Activated CD8-positive, alpha-beta T cell treated with anti-CD3 and anti-CD28 coated beads for 36 hours (primary cell): ENCODE measurements at regions of chr17 and their contacts with region 1.

Region 1: GRCh38 chr17:76014184-76014924 is 12.8 kb downstream of the EVPL start:
- DNase-seq: peak; percentile 88
- ATAC-seq: peak; percentile 100
- H3K4me3 Mint-ChIP-seq: no peak overlapping the region
- H3K27ac Mint-ChIP-seq: peak overlapping the region; percentile 55
- H3K4me1 Mint-ChIP-seq: peaks cover 8% of the 10 kb centered on the region
- H3K27me3 Mint-ChIP-seq: no peaks in the 10 kb centered on the region
- CTCF ChIP-seq: peak; percentile 95

Region 2: DNA sequence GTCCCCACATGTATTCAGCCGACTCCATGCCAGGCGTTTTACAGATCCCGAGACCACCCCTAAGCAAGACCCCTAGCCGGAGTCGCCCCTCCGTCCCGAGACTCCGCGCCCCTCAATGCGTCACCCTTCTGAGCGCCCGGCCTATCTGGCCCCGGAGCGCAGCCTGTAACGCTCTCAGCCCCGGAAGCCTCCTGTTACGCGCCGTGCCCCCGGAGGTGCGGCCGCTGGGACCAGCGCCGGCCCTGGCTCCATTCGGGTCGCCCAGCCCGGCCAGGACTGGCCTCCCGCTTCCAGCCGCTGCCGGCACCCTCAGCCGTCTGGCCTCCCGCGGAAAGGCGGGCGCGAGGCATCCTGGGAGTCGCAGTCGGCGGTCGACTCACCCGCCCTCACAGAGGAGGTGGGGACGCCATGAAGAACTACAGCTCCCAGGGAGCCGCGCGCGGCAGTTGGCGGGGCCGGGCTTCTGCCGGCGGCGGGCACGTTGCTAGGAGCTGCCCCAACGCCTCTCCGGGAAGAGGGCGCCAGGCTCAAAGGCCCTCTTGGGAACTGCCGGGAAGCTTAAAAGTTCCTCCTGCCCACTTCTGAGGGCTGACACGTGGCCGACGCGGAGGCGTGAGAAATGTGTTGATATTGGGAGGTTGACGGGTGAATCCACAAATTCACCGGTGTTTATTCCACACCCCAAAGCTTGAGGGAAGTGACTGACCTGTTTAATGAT is 73.5 kb before region 1 on chr17 and contains the start of gene FBF1:
- CTCF ChIA-PET with region 1: no interaction called
- POLR2A ChIA-PET with region 1: no interaction called
- intact Hi-C with region 1: no loop called
- DNase-seq: peak; percentile 93
- ATAC-seq: peak; percentile 99
- H3K4me3 Mint-ChIP-seq: peak within 1 kb of the TSS; percentile 86
- H3K27ac Mint-ChIP-seq: peak within 1 kb of the TSS; percentile 86
- H3K4me1 Mint-ChIP-seq: peaks cover 12% of the 10 kb centered on the region
- H3K27me3 Mint-ChIP-seq: no peaks in the 10 kb centered on the region
- CTCF ChIP-seq: no peak
- total RNA-seq, gene FBF1: 13.2 to 16.2 TPM

Region 3: DNA sequence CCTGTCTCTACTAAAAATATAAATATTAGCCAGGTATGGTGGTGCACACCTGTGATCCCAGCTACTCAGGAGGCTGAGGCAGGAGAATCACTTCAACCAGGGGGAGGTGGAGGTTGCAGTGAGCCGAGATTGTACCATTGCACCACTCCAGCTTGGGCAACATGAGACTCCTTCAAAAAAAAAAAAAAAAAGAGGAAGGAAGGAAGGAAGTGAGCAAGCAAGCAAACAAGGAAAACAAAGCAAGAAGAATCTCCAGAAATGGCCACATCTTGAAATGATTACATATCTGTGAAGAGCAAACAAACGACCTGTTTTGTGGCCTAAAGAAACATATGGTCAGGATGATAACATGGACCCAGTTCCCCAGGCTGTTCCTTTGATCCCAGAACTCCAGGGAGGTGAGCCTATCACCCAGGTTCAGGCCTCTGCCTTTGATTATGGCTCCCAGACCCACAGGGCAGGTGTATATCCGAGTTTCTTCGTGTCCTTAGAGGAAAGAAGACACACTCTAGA is 44.3 kb before region 1 on chr17:
- CTCF ChIA-PET with region 1: no interaction called
- POLR2A ChIA-PET with region 1: no interaction called
- intact Hi-C with region 1: no loop called
- DNase-seq: no peak
- ATAC-seq: no peak
- H3K4me3 Mint-ChIP-seq: no peak overlapping the region
- H3K27ac Mint-ChIP-seq: no peak overlapping the region
- H3K4me1 Mint-ChIP-seq: peaks cover 4% of the 10 kb centered on the region
- H3K27me3 Mint-ChIP-seq: no peaks in the 10 kb centered on the region
- CTCF ChIP-seq: no peak

Region 4: GRCh38 chr17:76000016-76000754 is 14.2 kb before region 1 on chr17:
- CTCF ChIA-PET with region 1: interaction called, 122 read pairs
- POLR2A ChIA-PET with region 1: no interaction called
- intact Hi-C with region 1: no loop called
- DNase-seq: peak; percentile 83
- ATAC-seq: peak; percentile 93
- H3K4me3 Mint-ChIP-seq: no peak overlapping the region
- H3K27ac Mint-ChIP-seq: no peak overlapping the region
- H3K4me1 Mint-ChIP-seq: peaks cover 14% of the 10 kb centered on the region
- H3K27me3 Mint-ChIP-seq: no peaks in the 10 kb centered on the region
- CTCF ChIP-seq: peak; percentile 86

Region 5: GRCh38 chr17:76048025-76048605 is 33.8 kb after region 1 on chr17:
- CTCF ChIA-PET with region 1: interaction called, 11 read pairs
- POLR2A ChIA-PET with region 1: no interaction called
- intact Hi-C with region 1: no loop called
- DNase-seq: no peak
- ATAC-seq: no peak
- H3K4me3 Mint-ChIP-seq: no peak overlapping the region
- H3K27ac Mint-ChIP-seq: no peak overlapping the region
- H3K4me1 Mint-ChIP-seq: peaks cover 10% of the 10 kb centered on the region
- H3K27me3 Mint-ChIP-seq: no peaks in the 10 kb centered on the region
- CTCF ChIP-seq: no peak

Region 6: DNA sequence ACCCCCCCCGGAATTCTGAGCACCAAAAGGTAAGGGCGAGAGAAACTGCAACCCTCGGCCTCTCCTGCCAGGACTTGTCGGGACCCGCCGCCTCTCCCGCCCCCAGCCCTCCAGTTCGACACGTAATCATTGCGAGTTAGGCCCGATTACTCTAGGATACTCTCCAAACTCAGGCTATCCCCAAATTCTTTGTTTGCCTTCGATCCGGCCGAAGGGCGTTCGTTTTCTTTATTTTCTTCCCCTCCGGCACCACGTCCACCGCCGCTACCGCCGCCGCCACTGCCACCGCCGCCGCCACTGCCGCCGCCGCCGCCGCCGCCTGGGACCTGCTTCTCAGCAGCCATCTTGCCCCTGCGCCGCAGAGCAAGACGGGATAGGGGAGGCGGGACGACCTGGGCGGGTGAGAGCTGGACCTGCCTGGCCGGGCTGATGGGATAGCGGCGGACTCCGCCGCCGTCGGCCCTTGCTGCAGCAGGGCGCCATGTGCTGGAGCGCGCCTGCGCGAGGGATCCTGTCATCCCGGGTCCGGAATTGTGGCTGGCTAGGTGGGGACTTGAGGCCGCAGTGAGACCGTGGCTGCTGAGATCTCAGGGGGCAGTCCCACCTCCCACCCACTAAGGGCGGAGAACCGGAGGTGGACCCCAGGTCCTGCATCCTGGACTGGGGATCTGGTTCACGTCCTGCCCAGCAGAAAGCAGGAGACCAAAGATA is 57.9 kb after region 1 on chr17 and contains the start of gene SRP68:
- CTCF ChIA-PET with region 1: interaction called, 10 read pairs
- POLR2A ChIA-PET with region 1: interaction called, 3 read pairs
- intact Hi-C with region 1: no loop called
- DNase-seq: peak; percentile 86
- ATAC-seq: peak; percentile 82
- H3K4me3 Mint-ChIP-seq: peak within 1 kb of the TSS; percentile 92
- H3K27ac Mint-ChIP-seq: peak within 1 kb of the TSS; percentile 99
- H3K4me1 Mint-ChIP-seq: peaks cover 42% of the 10 kb centered on the region
- H3K27me3 Mint-ChIP-seq: peaks cover 30% of the 10 kb centered on the region
- CTCF ChIP-seq: no peak
- total RNA-seq, gene SRP68: 132 to 135 TPM

Region 7: GRCh38 chr17:76095943-76096342 is 81.6 kb after region 1 on chr17:
- CTCF ChIA-PET with region 1: interaction called, 10 read pairs
- POLR2A ChIA-PET with region 1: no interaction called
- intact Hi-C with region 1: loop called (anchors 5 kb)
- DNase-seq: no peak
- ATAC-seq: no peak
- H3K4me3 Mint-ChIP-seq: no peak overlapping the region
- H3K27ac Mint-ChIP-seq: no peak overlapping the region
- H3K4me1 Mint-ChIP-seq: peaks cover 2% of the 10 kb centered on the region
- H3K27me3 Mint-ChIP-seq: no peaks in the 10 kb centered on the region
- CTCF ChIP-seq: no peak

Region 8: GRCh38 chr17:76296186-76296585 is 281.8 kb after region 1 on chr17:
- CTCF ChIA-PET with region 1: interaction called, 12 read pairs
- POLR2A ChIA-PET with region 1: no interaction called
- intact Hi-C with region 1: no loop called
- DNase-seq: no peak
- ATAC-seq: no peak
- H3K4me3 Mint-ChIP-seq: no peak overlapping the region
- H3K27ac Mint-ChIP-seq: no peak overlapping the region
- H3K4me1 Mint-ChIP-seq: no peaks in the 10 kb centered on the region
- H3K27me3 Mint-ChIP-seq: no peaks in the 10 kb centered on the region
- CTCF ChIP-seq: no peak